Heart right ventricle (tissue), 16 donors: ENCODE measurements at regions of chr10 and their contacts with region 1.

Region 1: GRCh38 chr10:34845070-34845469 is 30.0 kb upstream of the PARD3 start:
- DNase-seq: no peak
- ATAC-seq: no peak
- H3K4me3 ChIP-seq: no peak overlapping the region
- H3K27ac ChIP-seq: no peak overlapping the region
- H3K4me1 ChIP-seq: no peaks in the 10 kb centered on the region
- H3K27me3 ChIP-seq: peaks cover 0 to 13% (median 0%) of the 10 kb centered on the region in 7 donors
- CTCF ChIP-seq: no peak

Region 2: DNA sequence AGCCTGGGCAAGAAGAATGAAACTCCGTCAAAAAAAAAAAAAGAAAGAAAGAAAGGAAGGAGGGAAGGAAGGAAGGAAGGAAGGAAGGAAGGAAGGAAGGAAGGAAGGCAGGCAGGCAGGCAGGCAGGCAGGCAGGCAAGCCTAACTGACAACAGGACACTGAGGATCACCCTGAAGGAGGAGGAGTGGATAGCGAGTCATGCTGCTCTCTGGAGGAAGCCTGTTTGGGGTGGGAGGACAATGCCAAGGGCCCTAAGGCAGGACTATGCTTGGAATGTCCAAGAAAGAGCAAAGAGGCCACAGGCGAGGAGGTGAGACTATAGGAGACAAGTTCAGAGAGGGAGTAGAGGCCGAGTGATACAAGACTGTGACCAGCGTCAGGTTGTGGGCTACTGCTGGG is 77.1 kb after region 1 on chr10:
- intact Hi-C with region 1: loop called in 1 of 10 experiments (anchors 10 kb)
- DNase-seq: no peak
- ATAC-seq: no peak
- H3K4me3 ChIP-seq: no peak overlapping the region
- H3K27ac ChIP-seq: no peak overlapping the region
- H3K4me1 ChIP-seq: no peaks in the 10 kb centered on the region
- H3K27me3 ChIP-seq: peaks cover 0 to 12% (median 0%) of the 10 kb centered on the region in 7 donors
- CTCF ChIP-seq: no peak

Region 3: DNA sequence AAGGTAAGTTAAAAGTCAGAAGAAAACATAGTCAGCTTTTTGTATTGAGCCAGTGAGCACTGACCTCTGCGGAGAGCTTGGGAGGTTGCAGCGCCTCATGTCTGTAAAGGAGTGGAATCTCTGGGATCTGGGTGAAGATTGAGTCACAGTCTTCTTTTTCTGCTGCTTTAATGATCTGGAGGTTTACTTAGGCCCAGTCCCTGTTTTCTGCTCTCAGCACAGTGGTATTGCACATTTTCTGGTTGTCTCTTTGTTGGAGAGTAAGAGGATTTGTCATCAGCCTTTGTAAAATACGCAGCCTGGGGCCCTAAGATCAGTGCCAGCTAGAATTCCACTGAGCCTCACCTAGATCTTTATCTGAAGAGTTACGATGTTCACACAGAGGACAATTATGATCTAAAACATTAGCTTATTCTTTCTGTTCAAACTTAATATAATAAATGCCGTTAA is 701.8 kb after region 1 on chr10:
- intact Hi-C with region 1: no loop called
- DNase-seq: no peak
- ATAC-seq: no peak
- H3K4me3 ChIP-seq: no peak overlapping the region
- H3K27ac ChIP-seq: peak overlapping the region in 1 of 10 donors; percentile 3
- H3K4me1 ChIP-seq: peaks cover 0 to 28% (median 0%) of the 10 kb centered on the region in 9 donors
- H3K27me3 ChIP-seq: no peaks in the 10 kb centered on the region
- CTCF ChIP-seq: no peak